Endothelial cell of umbilical vein (primary cell): ENCODE measurements at regions of chr9 and their contacts with region 1.

Region 1: GRCh38 chr9:8895861-8896224 is 1096.3 kb upstream of the DMAC1 start:
- DNase-seq: peak; percentile 47
- H3K4me3 ChIP-seq: no peak overlapping the region
- H3K27ac ChIP-seq: no peak overlapping the region
- H3K4me1 ChIP-seq: no peaks in the 10 kb centered on the region
- H3K27me3 ChIP-seq: no peaks in the 10 kb centered on the region
- CTCF ChIP-seq: peak; percentile 14 to 26
- POLR2A ChIP-seq: no peak

Region 2: DNA sequence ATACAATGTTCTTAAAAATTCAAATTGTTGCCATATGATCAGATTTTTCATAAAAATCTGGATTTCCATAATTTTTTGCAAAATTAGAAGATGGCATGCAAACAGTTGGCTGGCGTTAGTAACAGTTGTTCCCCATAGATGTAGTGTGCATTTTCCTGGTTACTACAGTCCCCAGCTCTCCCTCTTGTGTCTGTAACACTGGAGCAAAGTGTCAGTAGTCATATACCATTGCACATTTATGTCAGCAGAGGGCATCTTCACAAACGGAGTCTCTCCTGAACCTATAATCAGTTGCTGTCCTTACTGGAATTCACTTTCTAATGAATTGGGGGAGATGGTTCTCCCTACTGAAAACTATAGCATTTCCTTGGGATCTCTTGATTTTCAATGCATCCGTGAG is 1051.6 kb before region 1 on chr9:
- CTCF ChIA-PET with region 1: interaction called, 25 read pairs
- POLR2A ChIA-PET with region 1: no interaction called
- dilution Hi-C with region 1: no loop called
- intact Hi-C with region 1: loop called (anchors 1 kb)
- DNase-seq: peak; percentile 27
- H3K4me3 ChIP-seq: no peak overlapping the region
- H3K27ac ChIP-seq: no peak overlapping the region
- H3K4me1 ChIP-seq: no peaks in the 10 kb centered on the region
- H3K27me3 ChIP-seq: no peaks in the 10 kb centered on the region
- CTCF ChIP-seq: no peak
- POLR2A ChIP-seq: no peak

Region 3: GRCh38 chr9:8486095-8486494 is 409.7 kb before region 1 on chr9:
- CTCF ChIA-PET with region 1: interaction called, 8 read pairs
- POLR2A ChIA-PET with region 1: no interaction called
- dilution Hi-C with region 1: no loop called
- intact Hi-C with region 1: loop called (anchors 1 kb)
- DNase-seq: peak; percentile 8
- H3K4me3 ChIP-seq: no peak overlapping the region
- H3K27ac ChIP-seq: no peak overlapping the region
- H3K4me1 ChIP-seq: no peaks in the 10 kb centered on the region
- H3K27me3 ChIP-seq: no peaks in the 10 kb centered on the region
- CTCF ChIP-seq: peak; percentile 9 to 14
- POLR2A ChIP-seq: no peak

Region 4: DNA sequence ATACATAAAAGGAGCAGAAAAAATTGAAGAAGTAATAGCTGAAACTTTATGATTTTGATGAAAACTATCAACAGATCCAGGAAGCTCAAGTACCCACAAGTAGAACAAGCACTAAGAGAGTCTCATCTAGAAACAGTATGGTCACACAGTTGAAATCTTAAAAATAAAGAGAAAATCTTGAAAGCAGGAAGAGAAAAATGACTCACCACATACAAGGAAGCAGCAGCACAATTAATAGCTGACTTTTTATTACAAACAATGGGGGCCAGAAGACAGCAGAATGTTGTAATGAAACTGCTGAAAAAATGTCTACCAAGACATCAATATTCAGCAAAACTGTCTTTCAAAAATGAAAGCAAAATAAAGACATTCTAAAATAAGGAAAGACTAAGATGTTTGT is 12.0 kb after region 1 on chr9:
- CTCF ChIA-PET with region 1: interaction called, 23 read pairs
- POLR2A ChIA-PET with region 1: no interaction called
- dilution Hi-C with region 1: no loop called
- intact Hi-C with region 1: no loop called
- DNase-seq: peak; percentile 40
- H3K4me3 ChIP-seq: no peak overlapping the region
- H3K27ac ChIP-seq: peak overlapping the region; percentile 37
- H3K4me1 ChIP-seq: peaks cover 7% of the 10 kb centered on the region
- H3K27me3 ChIP-seq: no peaks in the 10 kb centered on the region
- CTCF ChIP-seq: no peak
- POLR2A ChIP-seq: no peak